ENCODE measurements at regions of chr4 and their contacts with region 1.

Region 1: DNA sequence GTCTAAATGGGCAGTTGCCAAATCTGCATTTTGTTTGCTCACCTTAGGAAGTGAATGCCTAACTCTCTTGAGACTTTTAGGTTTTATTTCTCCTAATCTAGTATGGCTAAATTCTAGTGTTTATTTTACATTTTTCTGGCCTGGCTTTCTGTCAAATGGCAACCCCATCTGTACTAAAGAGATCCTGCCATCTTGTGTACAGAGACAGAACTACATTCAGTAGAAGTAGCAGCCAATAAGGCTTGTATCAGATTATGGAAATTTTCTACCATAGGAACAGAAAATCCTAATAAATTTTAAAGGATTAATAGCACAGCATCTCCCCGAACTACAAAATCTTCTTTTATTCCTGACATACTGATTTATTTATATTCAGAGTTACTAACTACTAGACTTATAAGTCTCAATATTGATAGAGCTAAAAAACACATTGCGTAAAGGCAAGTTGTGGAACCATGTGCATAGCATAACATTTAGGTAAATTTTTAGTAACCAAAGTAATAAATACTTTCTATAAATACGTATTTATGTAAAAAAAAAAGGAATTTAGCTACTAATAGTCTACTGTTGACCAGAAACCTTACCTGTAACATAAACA is 45.5 kb downstream of the TMEM144 start:
- DNase-seq: peak; percentile 30
- H3K4me3 ChIP-seq: no peak overlapping the region
- H3K27ac ChIP-seq: no peak overlapping the region
- H3K4me1 ChIP-seq: no peaks in the 10 kb centered on the region
- CTCF ChIP-seq: peak; percentile 81

Region 2: GRCh38 chr4:157992038-157992705 is 263.7 kb before region 1 on chr4:
- CTCF ChIA-PET with region 1: no interaction called
- POLR2A ChIA-PET with region 1: no interaction called
- intact Hi-C with region 1: loop called (anchors 2 kb)
- DNase-seq: peak; percentile 38
- H3K4me3 ChIP-seq: no peak overlapping the region
- H3K27ac ChIP-seq: no peak overlapping the region
- H3K4me1 ChIP-seq: no peaks in the 10 kb centered on the region
- CTCF ChIP-seq: peak; percentile 85

Region 3: DNA sequence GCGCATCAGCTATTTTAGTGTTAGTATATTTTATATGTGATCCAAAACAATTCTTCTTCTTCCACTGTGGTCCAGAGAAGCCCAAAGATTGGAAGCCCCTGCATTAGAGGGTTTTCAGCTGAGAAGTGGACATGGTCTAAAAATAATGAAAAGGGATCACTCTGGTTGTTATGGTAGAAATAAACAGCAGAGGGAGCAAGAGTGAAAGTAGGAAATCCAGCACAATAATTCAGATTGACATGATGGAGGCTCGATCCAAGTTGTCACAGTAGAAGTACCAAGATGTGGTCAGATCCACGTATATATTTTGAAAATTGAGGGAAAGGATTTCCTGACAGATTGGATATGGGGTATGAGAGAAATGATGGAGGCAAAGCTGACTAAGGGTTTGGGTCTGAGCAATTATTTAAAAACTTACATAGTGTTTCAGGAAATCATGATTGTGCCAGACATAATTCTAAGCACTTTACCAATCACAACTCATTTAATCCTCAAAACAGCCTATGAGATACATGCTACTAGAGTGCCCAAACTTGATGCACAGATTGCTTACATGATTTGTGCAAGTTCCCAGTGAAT is 62.6 kb before region 1 on chr4:
- CTCF ChIA-PET with region 1: no interaction called
- POLR2A ChIA-PET with region 1: no interaction called
- intact Hi-C with region 1: loop called (anchors 5 kb)
- DNase-seq: peak; percentile 13
- H3K4me3 ChIP-seq: no peak overlapping the region
- H3K27ac ChIP-seq: no peak overlapping the region
- H3K4me1 ChIP-seq: no peaks in the 10 kb centered on the region
- CTCF ChIP-seq: peak; percentile 72

Region 4: DNA sequence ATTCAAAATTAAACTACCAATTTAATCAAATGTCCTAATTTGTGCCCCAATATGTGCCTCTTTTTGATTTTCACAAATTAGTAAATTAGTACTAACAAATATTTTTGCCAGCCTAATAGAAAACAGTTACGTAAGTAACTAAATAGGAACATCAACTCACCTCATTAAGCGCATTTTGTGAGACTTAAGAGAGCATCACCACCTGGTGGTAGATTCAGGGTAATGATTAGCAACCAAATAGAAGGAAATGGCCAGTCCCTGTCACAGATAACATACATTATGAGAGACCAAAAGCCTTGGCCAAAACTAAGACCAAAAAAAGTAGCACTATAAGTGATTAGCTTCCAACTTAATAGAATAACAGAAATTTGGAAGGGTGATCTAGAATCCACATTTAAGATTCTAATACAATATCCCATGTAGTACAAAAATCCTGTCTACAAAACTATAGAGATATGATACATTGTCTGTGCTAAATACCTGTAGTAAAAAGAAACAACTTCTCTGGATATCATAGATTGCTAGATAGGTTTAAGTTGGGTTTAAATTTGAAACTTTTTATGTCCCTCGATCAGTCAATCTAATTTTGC is 369.2 kb after region 1 on chr4:
- CTCF ChIA-PET with region 1: no interaction called
- POLR2A ChIA-PET with region 1: no interaction called
- intact Hi-C with region 1: loop called (anchors 1 kb)
- DNase-seq: peak; percentile 60
- H3K4me3 ChIP-seq: no peak overlapping the region
- H3K27ac ChIP-seq: no peak overlapping the region
- H3K4me1 ChIP-seq: no peaks in the 10 kb centered on the region
- CTCF ChIP-seq: peak; percentile 87

Region 5: GRCh38 chr4:158850800-158851644 is 595.2 kb after region 1 on chr4:
- CTCF ChIA-PET with region 1: no interaction called
- POLR2A ChIA-PET with region 1: no interaction called
- intact Hi-C with region 1: loop called (anchors 5 kb)
- DNase-seq: peak; percentile 25
- H3K4me3 ChIP-seq: no peak overlapping the region
- H3K27ac ChIP-seq: no peak overlapping the region
- H3K4me1 ChIP-seq: no peaks in the 10 kb centered on the region
- CTCF ChIP-seq: peak; percentile 89

Region 6: GRCh38 chr4:159206427-159206871 is 950.6 kb after region 1 on chr4:
- CTCF ChIA-PET with region 1: no interaction called
- POLR2A ChIA-PET with region 1: no interaction called
- intact Hi-C with region 1: loop called (anchors 10 kb)
- DNase-seq: no peak
- H3K4me3 ChIP-seq: no peak overlapping the region
- H3K27ac ChIP-seq: no peak overlapping the region
- H3K4me1 ChIP-seq: peaks cover 6% of the 10 kb centered on the region
- CTCF ChIP-seq: no peak

Measured in OCI-LY7 (cell line).